ENCODE measurements at regions of chr2 and their contacts with region 1.

Region 1: GRCh38 chr2:232979871-232980461 is 33.1 kb downstream of the NGEF start:
- DNase-seq: no peak
- H3K4me3 ChIP-seq: no peak overlapping the region
- H3K27ac ChIP-seq: no peak overlapping the region
- H3K4me1 ChIP-seq: peaks cover 0 to 14% (median 7%) of the 10 kb centered on the region in 4 experiments; a peak in 5 of 7 replicates
- H3K27me3 ChIP-seq: no peaks in the 10 kb centered on the region; a peak in 1 of 7 replicates
- CTCF ChIP-seq: no peak
- EP300 ChIP-seq: no peak
- POLR2A ChIP-seq: no peak
- RAD21 ChIP-seq: peak in 1 of 2 experiments; percentile 34; a peak in 2 of 4 replicates

Region 2: GRCh38 chr2:233033672-233034071 is 53.7 kb after region 1 on chr2:
- CTCF ChIA-PET with region 1: interaction called, 70 read pairs
- POLR2A ChIA-PET with region 1: no interaction called
- DNase-seq: no peak
- H3K4me3 ChIP-seq: no peak overlapping the region
- H3K27ac ChIP-seq: no peak overlapping the region
- H3K4me1 ChIP-seq: peaks cover 0 to 6% (median 0%) of the 10 kb centered on the region in 4 experiments; a peak in 1 of 7 replicates
- H3K27me3 ChIP-seq: no peaks in the 10 kb centered on the region
- CTCF ChIP-seq: no peak
- EP300 ChIP-seq: no peak
- POLR2A ChIP-seq: no peak
- RAD21 ChIP-seq: no peak

Region 3: GRCh38 chr2:233061591-233062450 is 81.9 kb after region 1 on chr2:
- CTCF ChIA-PET with region 1: interaction called, 26 read pairs
- POLR2A ChIA-PET with region 1: no interaction called
- DNase-seq: no peak
- H3K4me3 ChIP-seq: no peak overlapping the region
- H3K27ac ChIP-seq: no peak overlapping the region
- H3K4me1 ChIP-seq: peaks cover 0 to 10% (median 4%) of the 10 kb centered on the region in 4 experiments; a peak in 4 of 7 replicates
- H3K27me3 ChIP-seq: no peaks in the 10 kb centered on the region; a peak in 1 of 7 replicates
- CTCF ChIP-seq: peak; percentile 41 to 57 (median 43)
- EP300 ChIP-seq: no peak
- POLR2A ChIP-seq: no peak
- RAD21 ChIP-seq: peak in 1 of 2 experiments; percentile 32; a peak in 1 of 4 replicates

Region 4: GRCh38 chr2:233142355-233142897 is 162.5 kb after region 1 on chr2:
- CTCF ChIA-PET with region 1: no interaction called
- POLR2A ChIA-PET with region 1: no interaction called
- DNase-seq: no peak
- H3K4me3 ChIP-seq: no peak overlapping the region
- H3K27ac ChIP-seq: no peak overlapping the region
- H3K4me1 ChIP-seq: peaks cover 6 to 24% (median 17%) of the 10 kb centered on the region in 4 experiments; a peak in 6 of 7 replicates
- H3K27me3 ChIP-seq: no peaks in the 10 kb centered on the region
- CTCF ChIP-seq: no peak
- EP300 ChIP-seq: no peak
- POLR2A ChIP-seq: no peak
- RAD21 ChIP-seq: no peak